ENCODE measurements at regions of chr2 and their contacts with region 1.

Region 1: DNA sequence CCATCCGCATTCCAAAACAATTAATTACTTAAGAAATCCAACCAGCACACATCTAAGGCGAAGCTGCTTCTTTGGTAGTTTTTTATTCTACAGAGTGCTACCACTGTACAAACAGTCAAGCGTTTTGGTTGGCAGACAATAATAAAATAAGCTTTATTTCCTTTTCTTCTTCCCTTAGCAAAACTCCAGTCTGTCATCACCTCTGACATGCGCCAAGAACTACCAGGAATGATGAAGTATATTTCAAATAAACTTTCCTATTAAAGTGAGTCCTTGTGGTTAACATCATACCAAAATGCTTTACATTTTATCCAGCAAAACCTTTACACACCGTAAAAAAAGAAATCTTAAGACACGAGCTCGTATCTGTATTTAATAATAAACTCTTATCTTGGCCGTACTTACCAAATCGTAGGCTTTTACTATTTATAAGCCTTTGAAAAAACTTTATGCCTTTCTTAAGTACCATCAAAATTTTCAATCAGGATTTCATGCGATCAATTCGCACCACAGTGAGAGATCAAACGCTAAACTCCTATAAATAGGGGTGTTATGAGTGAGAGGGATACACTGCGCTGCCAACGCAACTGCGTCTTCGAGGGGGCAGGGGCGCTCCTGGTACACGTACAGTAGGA is 1.2 kb downstream of the ATL2 start:
- DNase-seq: no peak
- H3K4me3 ChIP-seq: peak overlapping the region; percentile 95
- H3K27ac ChIP-seq: peak overlapping the region; percentile 100
- H3K4me1 ChIP-seq: peaks cover 59% of the 10 kb centered on the region
- H3K27me3 ChIP-seq: no peaks in the 10 kb centered on the region
- CTCF ChIP-seq: no peak

Region 2: DNA sequence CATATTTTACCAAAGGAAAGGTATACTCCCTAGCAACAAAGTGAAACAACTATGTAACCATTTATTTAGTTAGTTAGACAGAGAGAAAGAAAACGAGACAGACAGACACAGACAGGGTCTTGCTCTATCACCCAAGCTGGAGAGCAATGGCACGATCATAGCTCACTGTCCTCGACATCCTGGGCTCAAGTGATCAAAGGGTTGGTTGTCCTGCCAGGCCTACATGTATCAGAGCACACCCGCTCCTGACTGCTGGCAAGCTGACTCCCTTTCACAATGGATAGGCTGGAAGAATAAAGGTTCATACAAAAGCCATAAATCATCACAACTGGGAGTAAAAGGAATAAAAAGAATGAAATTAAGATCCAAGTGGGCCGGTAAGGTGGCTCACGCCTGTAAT is 52.2 kb before region 1 on chr2:
- intact Hi-C with region 1: loop called (anchors 2 kb)
- DNase-seq: no peak
- H3K4me3 ChIP-seq: no peak overlapping the region
- H3K27ac ChIP-seq: no peak overlapping the region
- H3K4me1 ChIP-seq: peaks cover 27% of the 10 kb centered on the region
- H3K27me3 ChIP-seq: no peaks in the 10 kb centered on the region
- CTCF ChIP-seq: no peak

Region 3: GRCh38 chr2:38474715-38475566 is 99.1 kb after region 1 on chr2:
- intact Hi-C with region 1: no loop called
- DNase-seq: no peak
- H3K4me3 ChIP-seq: no peak overlapping the region
- H3K27ac ChIP-seq: no peak overlapping the region
- H3K4me1 ChIP-seq: no peaks in the 10 kb centered on the region
- H3K27me3 ChIP-seq: no peaks in the 10 kb centered on the region
- CTCF ChIP-seq: no peak

Region 4: GRCh38 chr2:38554973-38555595 is 179.3 kb after region 1 on chr2:
- intact Hi-C with region 1: no loop called
- DNase-seq: no peak
- H3K4me3 ChIP-seq: no peak overlapping the region
- H3K27ac ChIP-seq: no peak overlapping the region
- H3K4me1 ChIP-seq: no peaks in the 10 kb centered on the region
- H3K27me3 ChIP-seq: no peaks in the 10 kb centered on the region
- CTCF ChIP-seq: peak; percentile 35

Measured in left ventricle myocardium inferior (tissue), 1 donor.